Aorta (tissue), 5 donors: ENCODE measurements at regions of chr3 and their contacts with region 1.

Region 1: DNA sequence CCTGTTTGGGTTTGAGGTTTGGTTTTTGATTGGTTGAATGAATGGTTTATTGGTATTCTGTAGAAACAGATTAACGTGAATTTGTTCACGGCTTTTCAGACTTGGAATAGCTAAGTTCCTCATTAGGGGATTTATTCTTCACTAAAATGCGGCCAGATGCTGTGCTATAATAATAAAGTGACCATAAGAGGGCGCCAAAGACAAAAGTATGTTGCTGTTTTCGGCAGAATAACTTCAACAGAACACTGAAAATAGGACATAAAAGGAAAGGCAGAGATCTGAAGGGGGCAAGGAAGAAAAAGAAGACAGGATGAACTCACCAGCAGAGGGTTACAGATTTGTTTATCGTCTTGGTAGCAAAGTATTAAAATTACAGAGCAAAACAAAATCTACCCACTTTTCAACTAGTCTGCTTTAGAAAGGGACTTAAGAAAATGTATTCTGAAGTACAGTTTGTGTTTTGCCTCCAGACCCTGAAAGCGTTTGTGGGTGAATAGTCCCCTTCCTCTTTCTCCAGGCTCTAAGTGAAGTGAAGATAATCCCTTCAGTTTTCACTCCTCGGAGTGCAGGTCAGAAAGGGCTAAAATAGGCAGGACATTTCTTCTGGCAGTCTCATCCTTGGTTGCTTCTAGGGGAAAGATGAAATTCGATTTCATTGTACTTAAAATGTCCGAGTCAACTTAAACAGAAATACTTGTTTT is 147.6 kb downstream of the IL20RB start:
- DNase-seq: no peak
- ATAC-seq: peak; percentile 80
- H3K4me3 ChIP-seq: no peak overlapping the region
- H3K27ac ChIP-seq: no peak overlapping the region
- H3K4me1 ChIP-seq: no peaks in the 10 kb centered on the region
- H3K27me3 ChIP-seq: peaks cover 0 to 2% of the 10 kb centered on the region in 2 donors

Region 2: GRCh38 chr3:137217733-137218132 is 112.3 kb after region 1 on chr3:
- intact Hi-C with region 1: no loop called
- DNase-seq: no peak
- ATAC-seq: no peak
- H3K4me3 ChIP-seq: no peak overlapping the region
- H3K27ac ChIP-seq: no peak overlapping the region
- H3K4me1 ChIP-seq: no peaks in the 10 kb centered on the region
- H3K27me3 ChIP-seq: no peaks in the 10 kb centered on the region

Region 3: DNA sequence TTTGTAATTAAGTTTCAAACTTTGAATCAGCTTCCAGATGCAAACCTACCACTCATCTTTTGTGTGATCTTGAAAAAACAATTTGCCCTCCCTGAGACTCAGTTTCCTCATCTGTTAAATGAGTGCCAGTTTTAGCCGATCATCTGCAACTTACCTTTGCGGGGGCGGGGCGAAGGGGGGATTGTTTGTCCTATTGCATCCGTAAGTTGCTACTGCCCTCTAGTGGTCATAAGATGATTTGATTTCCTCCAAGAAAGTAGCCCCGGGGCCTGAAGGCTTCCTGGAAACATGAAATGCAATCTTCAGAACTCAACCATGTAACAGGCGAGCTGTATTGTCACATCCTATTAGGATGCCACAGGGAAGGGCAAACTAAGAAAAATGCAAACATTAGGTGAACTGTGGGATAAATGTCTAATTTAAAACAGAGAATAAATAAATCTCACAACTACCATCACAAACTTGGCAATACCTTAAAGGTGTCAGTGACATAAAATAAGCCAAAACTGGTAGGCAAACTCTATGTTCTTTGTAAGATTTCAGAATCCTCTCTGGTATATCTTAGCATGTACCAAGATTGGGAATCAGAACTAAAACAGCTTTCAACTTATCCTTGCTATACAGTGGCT is 841.0 kb after region 1 on chr3:
- intact Hi-C with region 1: loop called (anchors 5 kb)
- DNase-seq: peak; percentile 46 to 75
- ATAC-seq: no peak
- H3K4me3 ChIP-seq: no peak overlapping the region
- H3K27ac ChIP-seq: no peak overlapping the region
- H3K4me1 ChIP-seq: no peaks in the 10 kb centered on the region
- H3K27me3 ChIP-seq: no peaks in the 10 kb centered on the region

Region 4: DNA sequence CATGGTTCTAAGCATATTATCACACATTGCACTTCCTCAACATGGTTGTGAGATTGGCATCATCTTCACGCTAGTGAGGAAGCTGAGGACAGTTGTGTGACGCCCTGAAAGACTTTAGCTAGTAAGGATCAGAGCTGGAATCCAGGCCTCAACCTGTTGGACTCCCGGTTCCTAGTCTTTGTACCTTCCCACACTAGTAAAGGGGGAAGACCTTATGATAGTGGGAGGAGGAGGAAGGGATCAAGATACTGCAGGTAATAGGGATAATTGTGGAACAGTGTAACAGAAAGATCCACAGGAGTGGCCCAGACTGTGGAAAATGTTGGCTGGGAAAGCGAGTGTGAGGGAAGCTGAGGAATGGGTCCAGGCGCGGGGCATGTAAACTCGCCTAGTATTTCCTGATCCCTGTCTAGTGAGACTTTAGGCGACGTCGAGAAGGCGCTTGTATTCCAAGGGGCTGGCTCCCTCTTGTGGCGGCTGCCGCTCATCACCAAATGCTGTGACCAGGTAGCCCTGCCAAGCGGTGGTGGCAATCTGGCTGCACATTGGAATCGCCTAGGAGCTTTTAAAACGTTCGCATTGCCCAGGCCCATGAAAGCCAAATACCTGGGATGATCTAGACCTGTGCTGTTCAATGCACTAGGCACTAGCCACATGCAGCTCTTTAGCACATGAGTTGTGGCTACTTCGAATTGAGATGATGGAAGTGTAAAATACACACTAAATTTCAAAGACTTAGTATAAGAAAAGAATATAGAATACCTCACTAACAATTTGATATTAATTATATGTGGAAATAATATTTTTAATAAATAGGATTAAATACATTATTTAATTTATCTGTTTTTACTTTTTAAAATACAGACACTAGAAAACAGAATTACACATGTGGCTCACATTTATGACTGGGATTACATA is 865.7 kb after region 1 on chr3:
- intact Hi-C with region 1: loop called in 1 of 2 experiments (anchors 10 kb)
- DNase-seq: peak; percentile 83 to 90
- ATAC-seq: peak; percentile 86
- H3K4me3 ChIP-seq: no peak overlapping the region
- H3K27ac ChIP-seq: no peak overlapping the region
- H3K4me1 ChIP-seq: no peaks in the 10 kb centered on the region
- H3K27me3 ChIP-seq: no peaks in the 10 kb centered on the region

Region 5: GRCh38 chr3:138051946-138052802 is 946.7 kb after region 1 on chr3:
- intact Hi-C with region 1: loop called in 1 of 2 experiments (anchors 10 kb)
- DNase-seq: no peak
- ATAC-seq: no peak
- H3K4me3 ChIP-seq: no peak overlapping the region
- H3K27ac ChIP-seq: no peak overlapping the region
- H3K4me1 ChIP-seq: no peaks in the 10 kb centered on the region
- H3K27me3 ChIP-seq: no peaks in the 10 kb centered on the region